Esophagus squamous epithelium (tissue), 5 donors: ENCODE measurements at regions of chr5 and their contacts with region 1.

Region 1: GRCh38 chr5:173293817-173294672 is 34.2 kb downstream of the STC2 start:
- DNase-seq: peak; percentile 9
- H3K4me3 ChIP-seq: peak overlapping the region in 2 of 4 donors; percentile 4 to 5
- H3K27ac ChIP-seq: no peak overlapping the region
- H3K4me1 ChIP-seq: peaks cover 0 to 22% (median 8%) of the 10 kb centered on the region in 3 donors
- H3K27me3 ChIP-seq: peaks cover 0 to 48% (median 1%) of the 10 kb centered on the region in 4 donors
- CTCF ChIP-seq: peak; percentile 79 to 92 (median 89)
- POLR2A ChIP-seq: no peak

Region 2: GRCh38 chr5:173331956-173332479 is 38.0 kb after region 1 on chr5:
- intact Hi-C with region 1: loop called (anchors 2 kb)
- DNase-seq: no peak
- H3K4me3 ChIP-seq: no peak overlapping the region
- H3K27ac ChIP-seq: no peak overlapping the region
- H3K4me1 ChIP-seq: peaks cover 28 to 36% (median 29%) of the 10 kb centered on the region in 3 donors
- H3K27me3 ChIP-seq: peaks cover 0 to 76% (median 8%) of the 10 kb centered on the region in 4 donors
- CTCF ChIP-seq: peak; percentile 66 to 99 (median 95)
- POLR2A ChIP-seq: no peak

Region 3: GRCh38 chr5:173468821-173469251 is 174.8 kb after region 1 on chr5:
- intact Hi-C with region 1: no loop called
- DNase-seq: no peak
- H3K4me3 ChIP-seq: no peak overlapping the region
- H3K27ac ChIP-seq: peak overlapping the region in 1 of 4 donors; percentile 51
- H3K4me1 ChIP-seq: peaks cover 0 to 26% (median 10%) of the 10 kb centered on the region in 3 donors
- H3K27me3 ChIP-seq: no peaks in the 10 kb centered on the region
- CTCF ChIP-seq: no peak
- POLR2A ChIP-seq: no peak